Dendritic cell treated with granulocyte-macrophage colony-stimulating factor and Interleukin-4, amounts not matched to agents 40 ng/mL and 50 ng/mL, for 4 days (primary cell): ENCODE measurements at regions of chr7 and their contacts with region 1.

Region 1: DNA sequence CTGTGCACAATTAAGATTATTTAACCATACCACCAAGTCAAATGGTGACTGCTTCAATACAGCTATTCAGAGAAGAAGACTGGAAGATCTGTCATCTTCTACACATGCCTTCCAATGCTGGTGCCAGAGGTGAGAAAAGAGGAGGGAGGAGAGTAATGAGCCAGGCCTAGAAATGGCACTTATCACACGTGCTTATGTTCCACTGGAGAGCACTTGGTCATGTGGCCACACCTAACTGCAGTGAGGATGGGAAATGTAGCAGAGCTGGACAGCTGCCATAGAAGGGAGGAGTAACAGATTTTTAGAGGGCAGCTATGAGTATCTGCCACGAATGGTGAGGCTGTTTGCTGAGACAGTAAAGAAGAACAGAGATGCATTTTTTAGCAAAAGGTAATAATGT is 77.1 kb downstream of the MPLKIP start:
- H3K4me3 Mint-ChIP-seq: no peak overlapping the region
- H3K27ac Mint-ChIP-seq: no peak overlapping the region
- H3K4me1 Mint-ChIP-seq: peaks cover 10% of the 10 kb centered on the region
- H3K27me3 Mint-ChIP-seq: no peaks in the 10 kb centered on the region

Region 2: GRCh38 chr7:39894904-39895303 is 162.4 kb before region 1 on chr7:
- intact Hi-C with region 1: loop called (anchors 1 kb)
- H3K4me3 Mint-ChIP-seq: no peak overlapping the region
- H3K27ac Mint-ChIP-seq: no peak overlapping the region
- H3K4me1 Mint-ChIP-seq: peaks cover 6% of the 10 kb centered on the region
- H3K27me3 Mint-ChIP-seq: no peaks in the 10 kb centered on the region

Region 3: DNA sequence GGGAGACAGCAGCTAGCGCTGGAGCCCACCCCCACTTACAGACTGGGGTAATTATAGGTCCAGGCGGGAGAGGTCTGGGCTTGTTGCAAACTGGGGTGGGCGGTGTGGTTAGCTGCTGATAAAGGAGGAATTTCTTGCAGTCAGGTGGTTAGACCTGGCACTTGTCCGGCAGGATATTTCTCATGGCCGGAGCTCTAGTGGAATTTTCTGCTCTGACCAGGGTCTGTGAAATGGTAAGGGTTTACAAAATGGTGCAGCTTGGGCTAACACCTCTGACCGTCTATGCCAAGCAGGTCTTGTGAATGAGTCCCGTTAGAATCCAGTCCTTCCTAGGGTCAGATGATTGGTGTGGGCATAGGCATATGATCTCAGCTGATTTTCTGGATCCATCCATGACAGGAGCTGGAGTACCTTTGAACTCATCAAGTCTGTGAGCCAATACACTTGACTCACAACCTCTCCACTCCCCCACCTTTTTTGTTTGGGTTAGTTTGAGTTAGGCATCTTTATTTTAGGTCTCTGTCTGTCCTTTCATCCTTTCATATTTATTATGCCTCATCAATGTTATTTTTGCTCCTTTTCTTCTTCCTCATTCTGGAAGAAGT is 290.9 kb after region 1 on chr7:
- intact Hi-C with region 1: no loop called
- H3K4me3 Mint-ChIP-seq: no peak overlapping the region
- H3K27ac Mint-ChIP-seq: no peak overlapping the region
- H3K4me1 Mint-ChIP-seq: no peaks in the 10 kb centered on the region
- H3K27me3 Mint-ChIP-seq: no peaks in the 10 kb centered on the region